ENCODE measurements at regions of chr6 and their contacts with region 1.

Region 1: DNA sequence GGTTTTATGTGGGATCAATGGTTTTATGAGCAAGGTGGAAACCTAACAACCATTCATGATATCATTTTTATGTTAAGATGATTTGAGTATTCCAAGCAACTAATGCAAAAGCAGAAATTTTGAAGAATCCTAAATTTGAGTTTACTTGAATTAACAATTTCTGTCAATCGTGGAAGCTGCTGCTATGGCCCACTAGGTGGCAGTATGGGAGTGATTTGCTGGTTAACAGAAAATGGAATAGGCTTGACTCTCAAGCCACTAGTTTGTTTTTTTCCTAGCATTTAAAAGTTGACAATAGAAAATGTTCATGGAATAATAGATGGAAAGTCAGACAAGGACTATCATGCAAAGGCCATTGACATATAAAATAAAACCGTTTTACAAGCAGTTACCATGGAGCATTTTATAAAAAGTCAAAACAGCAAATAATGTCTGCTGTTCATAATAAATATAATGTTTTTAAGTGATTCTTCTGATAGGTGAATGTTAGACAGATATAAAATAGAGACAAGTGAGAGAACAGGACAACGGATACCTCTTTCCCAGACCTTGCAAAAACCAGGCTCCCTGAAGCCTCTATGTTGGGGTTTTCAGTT is 43.0 kb upstream of the TMEM200A start:
- DNase-seq: no peak
- H3K4me3 ChIP-seq: no peak overlapping the region
- H3K27ac ChIP-seq: no peak overlapping the region
- H3K4me1 ChIP-seq: no peaks in the 10 kb centered on the region
- H3K27me3 ChIP-seq: no peaks in the 10 kb centered on the region
- CTCF ChIP-seq: peak; percentile 59 to 74 (median 65)
- POLR2A ChIP-seq: no peak

Region 2: DNA sequence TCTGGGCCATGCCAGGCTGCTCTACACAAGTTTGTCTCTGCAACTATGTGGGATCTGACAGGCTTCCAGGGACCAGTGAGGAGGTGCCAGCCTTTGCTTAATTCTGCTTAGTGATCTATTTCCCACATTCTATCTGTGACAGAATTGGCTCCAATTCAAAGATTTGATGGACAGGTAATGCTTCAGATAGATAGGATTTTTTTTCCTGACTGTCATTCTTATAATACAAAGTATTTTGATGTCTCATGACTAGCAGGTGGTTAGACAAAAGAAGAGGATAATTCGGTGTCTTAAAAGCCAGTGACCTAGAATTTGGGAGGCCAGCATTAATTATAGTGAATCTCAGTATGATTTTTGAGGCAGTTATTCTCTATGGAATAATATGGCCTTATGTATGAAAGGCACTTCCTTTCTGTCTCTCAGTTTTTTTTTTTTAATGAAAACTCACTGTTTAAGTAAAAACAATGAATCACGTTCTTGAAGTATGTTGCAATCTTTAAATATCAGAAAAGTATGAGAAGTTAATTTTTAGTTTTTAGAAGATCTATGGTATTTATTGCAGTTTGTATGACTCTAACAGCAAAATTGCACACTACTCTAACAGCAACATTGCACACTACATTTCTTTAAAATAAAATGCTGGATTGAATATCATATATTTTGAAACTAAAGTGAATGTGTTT is 86.8 kb after region 1 on chr6:
- intact Hi-C with region 1: loop called (anchors 5 kb)
- DNase-seq: no peak
- H3K4me3 ChIP-seq: no peak overlapping the region
- H3K27ac ChIP-seq: no peak overlapping the region
- H3K4me1 ChIP-seq: no peaks in the 10 kb centered on the region
- H3K27me3 ChIP-seq: no peaks in the 10 kb centered on the region
- CTCF ChIP-seq: no peak
- POLR2A ChIP-seq: no peak

Region 3: DNA sequence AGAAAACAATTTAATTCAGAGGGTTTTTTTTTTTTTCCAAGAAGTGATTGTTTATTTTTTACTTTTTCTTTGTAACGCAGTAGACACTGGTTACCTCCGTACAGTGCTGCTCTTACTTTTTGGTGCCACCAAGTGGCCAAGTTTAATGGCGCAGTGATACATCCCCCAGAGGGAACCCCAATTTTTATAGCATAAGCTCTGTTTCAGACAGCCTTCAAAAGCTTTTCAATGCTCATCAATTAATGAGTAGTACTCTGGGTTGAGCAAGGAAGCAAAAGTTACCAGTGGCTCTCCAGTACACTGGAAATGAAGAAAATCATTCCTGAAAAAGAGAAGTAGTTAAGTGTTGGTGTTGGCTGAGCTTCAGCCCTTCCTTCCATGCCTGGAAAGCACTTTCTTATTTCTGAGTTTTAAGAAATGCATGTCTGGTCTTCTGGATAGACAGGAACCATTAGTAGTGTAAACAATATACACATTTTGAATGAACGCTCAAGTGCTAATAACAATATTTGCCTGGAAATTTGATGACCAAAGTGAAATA is 375.3 kb after region 1 on chr6:
- intact Hi-C with region 1: loop called (anchors 10 kb)
- DNase-seq: no peak
- H3K4me3 ChIP-seq: no peak overlapping the region
- H3K27ac ChIP-seq: no peak overlapping the region
- H3K4me1 ChIP-seq: no peaks in the 10 kb centered on the region
- H3K27me3 ChIP-seq: no peaks in the 10 kb centered on the region
- CTCF ChIP-seq: peak; percentile 32 to 60 (median 49)
- POLR2A ChIP-seq: no peak

Region 4: GRCh38 chr6:130872250-130873095 is 549.7 kb after region 1 on chr6:
- intact Hi-C with region 1: loop called (anchors 10 kb)
- DNase-seq: no peak
- H3K4me3 ChIP-seq: no peak overlapping the region
- H3K27ac ChIP-seq: no peak overlapping the region
- H3K4me1 ChIP-seq: no peaks in the 10 kb centered on the region
- H3K27me3 ChIP-seq: no peaks in the 10 kb centered on the region
- CTCF ChIP-seq: peak; percentile 62 to 68 (median 63)
- POLR2A ChIP-seq: no peak